Activated T-helper 2 cell treated with anti-CD3 and anti-CD28 coated beads, Interferon-gamma antibody, Interleukin-2, Interleukin-4, amounts not matched to agents 10 μg/mL and 5 μg/mL and 100 μg/mL, durations not matched to agents 14 hours and 24 hours and 36 hours (primary cell): ENCODE measurements at regions of chr1 and their contacts with region 1.

Region 1: DNA sequence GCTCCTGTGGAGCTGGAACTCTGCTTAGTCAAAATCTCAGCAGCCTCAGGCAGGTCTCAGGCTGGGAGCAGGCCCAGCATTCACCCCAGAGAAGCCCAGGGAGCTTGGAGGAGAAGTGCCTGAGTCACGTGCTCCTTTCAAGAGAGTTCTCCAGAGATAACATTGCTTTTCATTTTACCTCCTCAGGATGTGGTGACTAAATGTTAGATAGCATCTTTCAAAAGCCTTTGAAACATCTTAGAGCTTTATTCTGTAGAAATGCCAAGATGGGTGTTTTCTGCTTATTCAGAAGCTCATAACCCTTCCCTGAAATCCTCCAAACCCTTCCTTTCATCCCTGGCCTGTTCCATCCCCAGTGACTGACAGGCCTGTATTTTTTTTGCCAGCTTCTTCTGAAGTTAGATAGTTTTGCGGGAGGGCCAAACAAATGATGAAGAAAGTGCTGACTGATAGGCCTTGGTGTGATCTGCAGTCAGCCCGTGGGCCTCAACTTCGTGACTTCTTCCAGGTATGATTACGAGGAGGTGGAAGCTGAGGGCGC is 58.0 kb downstream of the PGM1 start:
- DNase-seq: peak; percentile 38
- H3K4me3 Mint-ChIP-seq: peak overlapping the region; percentile 71
- H3K27ac Mint-ChIP-seq: peak overlapping the region; percentile 93
- H3K4me1 Mint-ChIP-seq: peaks cover 44% of the 10 kb centered on the region
- H3K27me3 Mint-ChIP-seq: no peaks in the 10 kb centered on the region

Region 2: GRCh38 chr1:63632110-63632509 is 19.1 kb before region 1 on chr1:
- intact Hi-C with region 1: loop called (anchors 1 kb)
- DNase-seq: no peak
- H3K4me3 Mint-ChIP-seq: no peak overlapping the region
- H3K27ac Mint-ChIP-seq: no peak overlapping the region
- H3K4me1 Mint-ChIP-seq: peaks cover 17% of the 10 kb centered on the region
- H3K27me3 Mint-ChIP-seq: no peaks in the 10 kb centered on the region